Heart left ventricle (tissue), 16 donors: ENCODE measurements at regions of chrX and their contacts with region 1.

Region 1: GRCh38 chrX:77693594-77693993 is 92.4 kb downstream of the ATRX start:
- DNase-seq: no peak
- ATAC-seq: no peak
- H3K4me3 ChIP-seq: no peak overlapping the region
- H3K27ac ChIP-seq: no peak overlapping the region
- H3K4me1 ChIP-seq: peaks cover 0 to 6% (median 0%) of the 10 kb centered on the region in 12 donors
- H3K27me3 ChIP-seq: no peaks in the 10 kb centered on the region
- CTCF ChIP-seq: no peak
- POLR2A ChIP-seq: no peak

Region 2: DNA sequence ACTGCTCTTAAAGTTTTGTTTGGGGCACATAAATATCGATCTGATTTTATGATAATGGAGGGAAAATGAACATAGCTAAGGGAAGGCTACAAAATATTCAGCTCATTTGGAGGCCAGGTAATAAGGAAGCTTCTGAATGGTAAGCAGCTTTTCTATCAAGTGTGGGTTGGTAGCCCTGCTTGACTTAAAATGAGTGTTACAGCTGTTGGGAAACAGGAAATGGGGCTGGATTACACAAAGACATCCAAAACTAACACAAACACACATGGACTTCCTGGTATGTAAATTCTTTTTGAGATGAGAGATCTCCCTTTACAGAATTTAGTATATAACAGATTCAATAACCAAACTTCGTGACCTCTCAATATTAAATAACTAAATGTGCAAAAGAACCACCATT is 188.4 kb before region 1 on chrX:
- intact Hi-C with region 1: no loop called
- DNase-seq: no peak
- ATAC-seq: peak in 2 of 4 donors; percentile 34 to 52
- H3K4me3 ChIP-seq: no peak overlapping the region
- H3K27ac ChIP-seq: peak overlapping the region in 3 of 12 donors; percentile 18 to 29 (median 26)
- H3K4me1 ChIP-seq: peaks cover 0 to 9% (median 0%) of the 10 kb centered on the region in 12 donors
- H3K27me3 ChIP-seq: peaks cover 0 to 4% (median 0%) of the 10 kb centered on the region in 9 donors
- CTCF ChIP-seq: no peak
- POLR2A ChIP-seq: no peak

Region 3: GRCh38 chrX:77564823-77565222 is 128.8 kb before region 1 on chrX:
- intact Hi-C with region 1: no loop called
- DNase-seq: no peak
- ATAC-seq: peak in 1 of 4 donors; percentile 46
- H3K4me3 ChIP-seq: no peak overlapping the region
- H3K27ac ChIP-seq: no peak overlapping the region
- H3K4me1 ChIP-seq: no peaks in the 10 kb centered on the region
- H3K27me3 ChIP-seq: no peaks in the 10 kb centered on the region
- CTCF ChIP-seq: no peak
- POLR2A ChIP-seq: no peak

Region 4: DNA sequence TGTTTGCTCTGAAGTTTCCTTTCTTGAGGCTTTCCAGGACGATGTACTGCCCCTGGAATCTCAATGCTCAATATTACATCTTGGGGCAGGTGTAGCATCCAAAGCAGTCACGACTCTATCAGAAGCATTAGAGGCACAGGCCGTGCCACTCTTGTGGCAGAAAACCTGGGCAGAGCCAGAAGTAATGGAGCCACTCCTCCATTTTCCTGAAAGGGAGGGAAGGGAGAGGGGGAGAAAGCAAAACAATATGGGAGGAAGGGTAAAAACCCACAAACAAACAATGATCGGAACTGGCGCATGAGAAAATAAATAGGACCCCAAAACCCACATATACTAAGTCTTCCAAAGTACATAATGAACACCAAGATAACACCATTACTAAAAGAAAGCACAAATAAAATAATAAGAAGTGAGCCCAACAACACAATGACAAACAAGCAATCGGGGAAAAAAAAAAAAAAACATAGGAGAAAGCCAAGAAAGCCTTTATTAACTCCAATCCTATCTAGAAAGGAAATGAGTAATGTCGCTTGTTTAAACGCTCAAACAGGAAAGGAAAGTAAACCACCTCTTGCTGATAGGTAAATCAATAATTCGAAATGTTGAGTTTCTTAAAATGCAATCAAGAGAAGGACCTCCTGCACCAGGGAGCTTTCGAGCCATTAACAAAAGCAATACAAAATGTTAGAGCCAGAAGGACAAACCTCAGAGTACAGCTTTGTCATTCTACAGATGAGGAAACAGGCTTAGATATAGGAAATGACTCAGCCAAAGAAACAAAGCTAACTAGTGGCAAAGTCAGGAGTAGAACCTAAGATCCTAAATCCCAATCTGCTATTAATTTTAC is 25.0 kb before region 1 on chrX:
- intact Hi-C with region 1: no loop called
- DNase-seq: no peak
- ATAC-seq: peak in 3 of 4 donors; percentile 45 to 65 (median 63)
- H3K4me3 ChIP-seq: no peak overlapping the region
- H3K27ac ChIP-seq: peak overlapping the region in 7 of 12 donors; percentile 7 to 49 (median 25)
- H3K4me1 ChIP-seq: peaks cover 0 to 11% (median 0%) of the 10 kb centered on the region in 12 donors
- H3K27me3 ChIP-seq: no peaks in the 10 kb centered on the region
- CTCF ChIP-seq: no peak
- POLR2A ChIP-seq: no peak

Region 5: GRCh38 chrX:77785486-77786364 is 92.1 kb after region 1 on chrX and contains the start of gene ATRX:
- intact Hi-C with region 1: loop called in 1 of 10 experiments (anchors 10 kb)
- DNase-seq: peak; percentile 72 to 80 (median 75)
- ATAC-seq: peak; percentile 90 to 96 (median 93)
- H3K4me3 ChIP-seq: peak within 1 kb of the TSS; percentile 50 to 94 (median 68)
- H3K27ac ChIP-seq: peak within 1 kb of the TSS; percentile 78 to 95 (median 89)
- H3K4me1 ChIP-seq: peaks cover 0 to 33% (median 7%) of the 10 kb centered on the region in 12 donors
- H3K27me3 ChIP-seq: no peaks in the 10 kb centered on the region
- CTCF ChIP-seq: no peak
- POLR2A ChIP-seq: peak in 1 of 2 donors; percentile 26
- total RNA-seq, gene ATRX: 52.4 to 102 (median 85.0) TPM